Panc1 (cell line): ENCODE measurements at regions of chr13 and their contacts with region 1.

Region 1: DNA sequence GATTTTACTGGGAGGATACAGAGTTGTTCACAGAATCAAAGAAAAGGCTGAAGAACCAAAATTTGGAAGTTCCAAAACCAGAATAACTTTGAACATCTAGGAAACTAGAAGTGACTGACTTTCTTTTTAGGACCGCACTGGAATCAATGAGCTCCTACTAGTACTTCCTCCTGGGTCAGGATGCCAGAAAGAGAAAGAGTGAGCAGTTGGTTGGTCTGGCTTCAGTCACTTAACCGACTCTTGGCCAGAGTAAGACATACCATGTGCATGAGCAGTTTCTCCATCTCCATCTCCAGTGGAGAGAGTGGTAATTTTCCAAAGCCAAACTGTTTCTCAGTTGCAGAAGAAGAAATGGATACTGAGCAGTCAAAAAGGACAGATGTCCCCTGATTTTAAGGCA is 27.1 kb upstream of the MTUS2 start:
- DNase-seq: no peak
- ATAC-seq: no peak
- H3K4me3 ChIP-seq: no peak overlapping the region
- H3K27ac ChIP-seq: no peak overlapping the region
- H3K4me1 ChIP-seq: no peaks in the 10 kb centered on the region; the same call in 1 of the 2 replicates
- H3K27me3 ChIP-seq: no peaks in the 10 kb centered on the region
- CTCF ChIP-seq: no peak

Region 2: DNA sequence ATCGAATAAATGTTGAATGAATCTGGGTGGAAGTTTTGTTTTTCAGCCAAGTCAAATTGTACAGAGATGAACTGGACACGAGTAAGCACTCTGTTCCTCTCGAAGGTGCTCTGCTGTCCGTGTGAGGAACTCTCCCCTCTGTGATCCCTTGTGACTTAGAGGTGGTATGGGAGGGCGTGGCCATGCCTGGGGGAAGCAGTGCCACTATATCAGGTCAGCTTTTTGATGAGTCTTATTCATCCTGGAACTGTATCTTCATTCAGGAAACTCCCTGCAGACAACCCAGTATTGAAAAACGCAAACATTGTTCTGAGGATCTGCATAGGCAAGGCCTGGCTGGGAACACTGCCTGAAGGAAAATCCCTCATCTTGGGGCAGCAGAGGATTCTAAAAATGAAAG is 252.4 kb before region 1 on chr13:
- CTCF ChIA-PET with region 1: no interaction called
- POLR2A ChIA-PET with region 1: no interaction called
- in situ Hi-C with region 1: no loop called
- intact Hi-C with region 1: no loop called
- DNase-seq: no peak
- ATAC-seq: no peak
- H3K4me3 ChIP-seq: no peak overlapping the region
- H3K27ac ChIP-seq: no peak overlapping the region
- H3K4me1 ChIP-seq: no peaks in the 10 kb centered on the region
- H3K27me3 ChIP-seq: no peaks in the 10 kb centered on the region
- CTCF ChIP-seq: no peak

Region 3: DNA sequence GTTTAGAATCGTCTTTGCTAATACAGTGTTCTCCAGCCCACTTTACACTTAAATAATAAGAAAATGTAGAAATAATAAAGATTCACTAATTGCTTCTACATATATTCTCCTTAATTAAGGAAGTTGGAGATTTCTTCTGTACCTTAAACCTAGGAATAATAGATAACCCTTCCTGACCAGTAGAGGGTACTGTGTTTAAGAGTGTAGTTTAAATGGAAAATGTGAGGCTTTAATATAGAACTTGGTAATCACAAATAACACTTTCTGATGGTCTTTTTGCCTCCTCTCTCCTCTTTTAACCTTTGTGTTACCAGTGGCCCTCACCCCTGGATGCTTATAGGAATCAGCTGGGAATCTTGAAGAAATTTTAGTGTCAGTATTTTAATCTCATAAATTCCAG is 113.4 kb before region 1 on chr13:
- CTCF ChIA-PET with region 1: interaction called, 16 read pairs
- POLR2A ChIA-PET with region 1: no interaction called
- in situ Hi-C with region 1: no loop called
- intact Hi-C with region 1: loop called (anchors 5 kb)
- DNase-seq: no peak
- ATAC-seq: no peak
- H3K4me3 ChIP-seq: no peak overlapping the region
- H3K27ac ChIP-seq: no peak overlapping the region
- H3K4me1 ChIP-seq: no peaks in the 10 kb centered on the region
- H3K27me3 ChIP-seq: no peaks in the 10 kb centered on the region
- CTCF ChIP-seq: peak; percentile 27; the same call in 1 of the 2 replicates

Region 4: GRCh38 chr13:28747851-28748250 is 45.1 kb before region 1 on chr13:
- CTCF ChIA-PET with region 1: interaction called, 10 read pairs
- POLR2A ChIA-PET with region 1: no interaction called
- in situ Hi-C with region 1: no loop called
- intact Hi-C with region 1: no loop called
- DNase-seq: no peak
- ATAC-seq: no peak
- H3K4me3 ChIP-seq: no peak overlapping the region
- H3K27ac ChIP-seq: no peak overlapping the region
- H3K4me1 ChIP-seq: peaks cover 2% of the 10 kb centered on the region; the same call in 1 of the 2 replicates
- H3K27me3 ChIP-seq: no peaks in the 10 kb centered on the region
- CTCF ChIP-seq: no peak

Region 5: DNA sequence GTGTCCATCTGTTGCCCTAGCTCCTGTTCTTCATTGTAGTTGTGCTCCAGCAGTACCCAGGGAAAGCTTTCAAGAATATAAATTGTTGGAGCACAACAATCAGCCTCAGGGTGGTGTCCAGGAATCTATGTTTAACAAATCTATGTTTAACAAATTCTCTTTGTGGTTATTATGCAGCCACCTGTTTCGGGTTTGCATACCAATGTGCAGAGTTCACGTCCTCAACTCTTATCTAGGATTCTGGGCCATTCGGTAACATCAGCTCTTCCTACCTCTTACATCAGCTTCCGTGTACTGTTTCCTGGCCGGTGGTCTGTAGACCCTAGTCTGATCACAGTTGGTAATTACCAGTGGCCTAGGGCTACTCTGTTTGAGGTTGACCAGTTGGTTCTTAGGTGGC is 44.1 kb after region 1 on chr13:
- CTCF ChIA-PET with region 1: no interaction called
- POLR2A ChIA-PET with region 1: no interaction called
- in situ Hi-C with region 1: no loop called
- intact Hi-C with region 1: no loop called
- DNase-seq: no peak
- ATAC-seq: no peak
- H3K4me3 ChIP-seq: no peak overlapping the region
- H3K27ac ChIP-seq: no peak overlapping the region
- H3K4me1 ChIP-seq: no peaks in the 10 kb centered on the region
- H3K27me3 ChIP-seq: no peaks in the 10 kb centered on the region; the same call in 1 of the 2 replicates
- CTCF ChIP-seq: no peak